MCF 10A (cell line): ENCODE measurements at regions of chr1 and their contacts with region 1.

Region 1: GRCh38 chr1:186605762-186606350 is 74.4 kb downstream of the PTGS2 start:
- DNase-seq: peak; percentile 83
- H3K4me3 Mint-ChIP-seq: no peak overlapping the region
- H3K27ac Mint-ChIP-seq: no peak overlapping the region
- H3K4me1 Mint-ChIP-seq: no peaks in the 10 kb centered on the region
- H3K27me3 Mint-ChIP-seq: no peaks in the 10 kb centered on the region
- CTCF ChIP-seq: peak; percentile 91

Region 2: GRCh38 chr1:186443638-186444037 is 162.2 kb before region 1 on chr1:
- CTCF ChIA-PET with region 1: no interaction called
- POLR2A ChIA-PET with region 1: no interaction called
- intact Hi-C with region 1: no loop called
- DNase-seq: no peak
- H3K4me3 Mint-ChIP-seq: no peak overlapping the region
- H3K27ac Mint-ChIP-seq: no peak overlapping the region
- H3K4me1 Mint-ChIP-seq: peaks cover 15% of the 10 kb centered on the region
- H3K27me3 Mint-ChIP-seq: no peaks in the 10 kb centered on the region
- CTCF ChIP-seq: no peak

Region 3: GRCh38 chr1:186476264-186477040 is 129.4 kb before region 1 on chr1:
- CTCF ChIA-PET with region 1: interaction called, 16 read pairs
- POLR2A ChIA-PET with region 1: no interaction called
- intact Hi-C with region 1: no loop called
- DNase-seq: no peak
- H3K4me3 Mint-ChIP-seq: no peak overlapping the region
- H3K27ac Mint-ChIP-seq: no peak overlapping the region
- H3K4me1 Mint-ChIP-seq: no peaks in the 10 kb centered on the region
- H3K27me3 Mint-ChIP-seq: no peaks in the 10 kb centered on the region
- CTCF ChIP-seq: no peak

Region 4: GRCh38 chr1:186618401-186619170 is 12.7 kb after region 1 on chr1:
- CTCF ChIA-PET with region 1: interaction called, 27 read pairs
- POLR2A ChIA-PET with region 1: no interaction called
- intact Hi-C with region 1: no loop called
- DNase-seq: peak; percentile 74
- H3K4me3 Mint-ChIP-seq: peak overlapping the region; percentile 56
- H3K27ac Mint-ChIP-seq: peak overlapping the region; percentile 46
- H3K4me1 Mint-ChIP-seq: peaks cover 15% of the 10 kb centered on the region
- H3K27me3 Mint-ChIP-seq: no peaks in the 10 kb centered on the region
- CTCF ChIP-seq: no peak

Region 5: DNA sequence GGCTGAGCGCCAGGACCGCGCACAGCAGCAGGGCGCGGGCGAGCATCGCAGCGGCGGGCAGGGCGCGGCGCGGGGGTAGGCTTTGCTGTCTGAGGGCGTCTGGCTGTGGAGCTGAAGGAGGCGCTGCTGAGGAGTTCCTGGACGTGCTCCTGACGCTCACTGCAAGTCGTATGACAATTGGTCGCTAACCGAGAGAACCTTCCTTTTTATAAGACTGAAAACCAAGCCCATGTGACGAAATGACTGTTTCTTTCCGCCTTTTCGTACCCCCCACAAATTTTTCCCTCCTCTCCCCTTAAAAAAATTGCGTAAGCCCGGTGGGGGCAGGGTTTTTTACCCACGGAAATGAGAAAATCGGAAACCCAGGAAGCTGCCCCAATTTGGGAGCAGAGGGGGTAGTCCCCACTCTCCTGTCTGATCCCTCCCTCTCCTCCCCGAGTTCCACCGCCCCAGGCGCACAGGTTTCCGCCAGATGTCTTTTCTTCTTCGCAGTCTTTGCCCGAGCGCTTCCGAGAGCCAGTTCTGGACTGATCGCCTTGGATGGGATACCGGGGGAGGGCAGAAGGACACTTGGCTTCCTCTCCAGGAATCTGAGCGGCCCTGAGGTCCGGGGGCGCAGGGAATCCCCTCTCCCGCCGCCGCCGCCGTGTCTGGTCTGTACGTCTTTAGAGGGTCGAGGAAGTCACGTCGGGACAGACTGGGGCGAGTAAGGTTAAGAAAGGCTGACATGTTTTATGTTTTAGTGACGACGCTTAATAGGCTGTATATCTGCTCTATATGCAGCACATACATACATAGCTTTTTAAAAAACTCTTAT is 74.6 kb after region 1 on chr1 and contains the start of gene PTGS2:
- CTCF ChIA-PET with region 1: interaction called, 134 read pairs
- POLR2A ChIA-PET with region 1: interaction called, 15 read pairs
- intact Hi-C with region 1: loop called (anchors 1 kb)
- DNase-seq: peak; percentile 96
- H3K4me3 Mint-ChIP-seq: peak within 1 kb of the TSS; percentile 96
- H3K27ac Mint-ChIP-seq: peak within 1 kb of the TSS; percentile 97
- H3K4me1 Mint-ChIP-seq: peaks cover 29% of the 10 kb centered on the region
- H3K27me3 Mint-ChIP-seq: no peaks in the 10 kb centered on the region
- CTCF ChIP-seq: peak; percentile 64
- total RNA-seq, gene PTGS2: 6.0 and 17.6 TPM in 2 replicates

Region 6: GRCh38 chr1:186806477-186806876 is 200.6 kb after region 1 on chr1:
- CTCF ChIA-PET with region 1: interaction called, 33 read pairs
- POLR2A ChIA-PET with region 1: interaction called, 3 read pairs
- intact Hi-C with region 1: loop called (anchors 2 kb)
- DNase-seq: peak; percentile 58
- H3K4me3 Mint-ChIP-seq: no peak overlapping the region
- H3K27ac Mint-ChIP-seq: no peak overlapping the region
- H3K4me1 Mint-ChIP-seq: no peaks in the 10 kb centered on the region
- H3K27me3 Mint-ChIP-seq: no peaks in the 10 kb centered on the region
- CTCF ChIP-seq: no peak

Region 7: DNA sequence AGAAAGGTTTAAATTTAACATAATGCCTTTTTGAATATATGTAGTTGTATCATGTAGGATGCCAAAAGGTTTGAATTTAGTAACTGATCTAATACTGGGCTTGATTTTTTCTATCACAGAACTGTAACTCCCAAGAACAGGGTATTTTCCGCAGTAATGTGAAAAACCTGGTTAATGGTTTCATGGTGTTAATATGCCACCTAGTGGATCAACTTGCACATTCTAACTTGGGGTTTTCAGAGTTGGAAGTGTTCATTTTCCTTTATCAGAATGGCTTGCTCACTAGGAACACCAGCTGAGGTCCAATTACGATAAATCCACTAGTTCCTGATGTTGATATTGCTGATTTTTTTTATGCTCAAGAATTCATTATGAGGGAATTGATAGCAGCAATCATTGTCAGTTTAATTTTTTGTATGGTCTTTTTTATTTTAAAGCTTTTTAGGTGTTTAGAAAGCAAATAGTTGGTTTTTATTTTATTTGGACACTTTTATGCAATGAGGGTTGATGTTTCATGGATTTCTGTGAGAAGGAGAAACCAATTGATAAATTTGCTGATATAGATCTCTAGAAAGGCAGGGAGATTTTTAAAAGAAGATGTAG is 380.1 kb after region 1 on chr1:
- CTCF ChIA-PET with region 1: interaction called, 77 read pairs
- POLR2A ChIA-PET with region 1: no interaction called
- intact Hi-C with region 1: loop called (anchors 1 kb)
- DNase-seq: peak; percentile 80
- H3K4me3 Mint-ChIP-seq: no peak overlapping the region
- H3K27ac Mint-ChIP-seq: no peak overlapping the region
- H3K4me1 Mint-ChIP-seq: no peaks in the 10 kb centered on the region
- H3K27me3 Mint-ChIP-seq: no peaks in the 10 kb centered on the region
- CTCF ChIP-seq: peak; percentile 90

Region 8: DNA sequence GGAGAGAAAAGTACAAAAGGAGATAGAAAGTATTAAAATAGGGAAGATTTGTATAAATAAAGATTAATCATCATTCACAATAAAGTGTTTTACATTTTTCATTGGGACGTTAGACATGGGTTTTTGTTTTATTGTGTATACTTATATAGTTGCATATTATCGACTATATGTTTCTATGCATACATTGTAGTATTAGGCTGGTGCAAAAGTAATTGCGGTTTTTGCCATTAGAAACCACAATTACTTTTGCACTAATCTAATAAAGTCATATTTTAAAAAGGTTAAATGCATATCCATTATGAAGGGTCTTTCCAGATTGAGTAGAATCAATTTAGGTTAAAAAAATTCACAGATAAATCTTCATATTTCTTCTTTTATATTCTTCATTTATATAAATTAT is 1541.4 kb after region 1 on chr1:
- CTCF ChIA-PET with region 1: no interaction called
- POLR2A ChIA-PET with region 1: no interaction called
- intact Hi-C with region 1: no loop called
- DNase-seq: no peak
- H3K4me3 Mint-ChIP-seq: no peak overlapping the region
- H3K27ac Mint-ChIP-seq: no peak overlapping the region
- H3K4me1 Mint-ChIP-seq: no peaks in the 10 kb centered on the region
- H3K27me3 Mint-ChIP-seq: no peaks in the 10 kb centered on the region
- CTCF ChIP-seq: no peak